SK-N-SH (cell line): ENCODE measurements at regions of chr5 and their contacts with region 1.

Region 1: GRCh38 chr5:81194633-81195333 is 38.3 kb upstream of the CKMT2 start:
- DNase-seq: peak; percentile 94
- H3K4me3 ChIP-seq: peak overlapping the region in 1 of 2 experiments; percentile 35; a peak in 1 of 4 replicates
- H3K27ac ChIP-seq: no peak overlapping the region
- H3K4me1 ChIP-seq: peaks cover 0 to 4% of the 10 kb centered on the region in 2 experiments; a peak in 1 of 4 replicates
- H3K27me3 ChIP-seq: no peaks in the 10 kb centered on the region
- CTCF ChIP-seq: peak; percentile 92
- EP300 ChIP-seq: no peak
- RAD21 ChIP-seq: peak; percentile 94

Region 2: GRCh38 chr5:80686757-80687156 is 508.0 kb before region 1 on chr5:
- CTCF ChIA-PET with region 1: interaction called, 22 read pairs
- POLR2A ChIA-PET with region 1: no interaction called
- DNase-seq: no peak
- H3K4me3 ChIP-seq: no peak overlapping the region; a peak in 1 of 4 replicates
- H3K27ac ChIP-seq: no peak overlapping the region
- H3K4me1 ChIP-seq: no peaks in the 10 kb centered on the region
- H3K27me3 ChIP-seq: no peaks in the 10 kb centered on the region
- CTCF ChIP-seq: peak; percentile 64
- EP300 ChIP-seq: no peak
- RAD21 ChIP-seq: peak; percentile 67

Region 3: DNA sequence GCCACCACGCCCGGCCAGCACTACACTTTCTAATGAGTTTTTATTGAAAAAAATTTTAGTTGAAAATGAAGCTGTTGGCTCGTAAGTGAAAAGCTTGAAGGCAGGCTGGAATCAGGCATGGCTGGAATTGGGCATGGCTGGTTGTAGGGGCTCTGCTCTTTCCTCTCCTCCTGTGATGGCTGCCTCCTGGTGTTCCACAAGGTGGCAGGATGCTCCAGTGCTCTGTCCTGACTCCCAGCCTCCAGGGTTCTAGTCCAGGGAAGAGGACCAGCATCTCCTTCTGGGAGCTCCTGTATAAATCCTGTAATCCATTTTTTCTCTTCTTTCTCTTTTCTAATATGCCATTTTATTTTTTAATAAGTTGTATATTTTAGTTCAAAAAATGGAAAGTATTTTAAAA is 482.8 kb before region 1 on chr5:
- CTCF ChIA-PET with region 1: interaction called, 22 read pairs
- POLR2A ChIA-PET with region 1: no interaction called
- DNase-seq: peak; percentile 58
- H3K4me3 ChIP-seq: no peak overlapping the region
- H3K27ac ChIP-seq: no peak overlapping the region
- H3K4me1 ChIP-seq: no peaks in the 10 kb centered on the region; a peak in 2 of 4 replicates
- H3K27me3 ChIP-seq: no peaks in the 10 kb centered on the region
- CTCF ChIP-seq: peak; percentile 53
- EP300 ChIP-seq: no peak
- RAD21 ChIP-seq: peak; percentile 77

Region 4: DNA sequence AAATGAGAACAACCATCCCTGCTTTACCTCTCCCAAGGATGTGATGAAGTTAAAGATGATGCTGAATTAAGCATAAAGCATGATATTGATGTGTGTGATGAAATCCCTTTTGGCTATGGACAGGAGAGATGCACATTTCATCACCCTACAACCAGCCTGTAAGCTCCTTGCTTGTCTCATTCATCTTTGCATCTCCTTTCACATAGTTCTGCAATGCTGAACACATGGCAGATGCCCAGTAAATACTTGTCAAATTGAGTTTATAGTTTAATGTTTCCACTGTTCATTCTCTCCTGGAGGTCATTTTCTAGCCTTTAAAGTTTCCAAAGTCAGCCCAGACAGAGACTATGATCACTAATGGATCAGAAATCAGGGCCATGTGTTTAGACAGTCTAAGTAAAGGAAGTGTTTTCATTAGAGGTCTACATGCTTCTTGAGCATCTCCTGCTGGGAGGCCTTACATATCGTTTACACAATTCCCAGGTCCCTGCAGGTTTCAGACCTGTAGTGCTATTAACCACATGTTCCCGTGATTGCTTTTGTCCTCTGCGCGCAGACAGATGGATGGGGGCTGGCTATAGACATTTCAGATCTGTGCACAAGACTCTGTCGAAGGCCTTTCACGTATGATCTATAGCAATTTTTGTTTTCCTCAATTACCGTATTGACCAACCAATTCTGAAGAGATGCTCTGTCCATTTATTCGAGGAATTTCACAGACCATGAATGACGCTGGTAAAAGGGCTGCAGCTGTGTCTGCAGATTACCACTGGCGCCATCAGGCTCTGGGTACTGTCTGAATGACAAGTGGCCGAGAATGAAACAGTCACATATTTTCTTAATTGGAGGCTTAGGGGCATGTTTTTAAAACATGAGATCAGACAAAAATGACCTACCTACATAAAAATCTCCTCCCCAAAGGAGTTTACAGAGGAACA is 10.7 kb before region 1 on chr5:
- CTCF ChIA-PET with region 1: interaction called, 58 read pairs
- POLR2A ChIA-PET with region 1: no interaction called
- DNase-seq: peak; percentile 64
- H3K4me3 ChIP-seq: no peak overlapping the region
- H3K27ac ChIP-seq: peak overlapping the region; percentile 15 to 86; a peak in 3 of 4 replicates
- H3K4me1 ChIP-seq: peaks cover 0 to 52% of the 10 kb centered on the region in 2 experiments; a peak in 2 of 4 replicates
- H3K27me3 ChIP-seq: no peaks in the 10 kb centered on the region
- CTCF ChIP-seq: no peak
- EP300 ChIP-seq: peak in 1 of 2 experiments; percentile 75; a peak in 2 of 4 replicates
- RAD21 ChIP-seq: no peak; the same call in 1 of the 2 replicates

Region 5: GRCh38 chr5:81207009-81207408 is 12.2 kb after region 1 on chr5:
- CTCF ChIA-PET with region 1: interaction called, 14 read pairs
- POLR2A ChIA-PET with region 1: no interaction called
- DNase-seq: no peak
- H3K4me3 ChIP-seq: no peak overlapping the region
- H3K27ac ChIP-seq: no peak overlapping the region
- H3K4me1 ChIP-seq: no peaks in the 10 kb centered on the region; a peak in 1 of 4 replicates
- H3K27me3 ChIP-seq: no peaks in the 10 kb centered on the region
- CTCF ChIP-seq: 0 out of 2 replicates have a peak, but pooled peaks have one; percentile 16
- EP300 ChIP-seq: no peak
- RAD21 ChIP-seq: no peak

Region 6: DNA sequence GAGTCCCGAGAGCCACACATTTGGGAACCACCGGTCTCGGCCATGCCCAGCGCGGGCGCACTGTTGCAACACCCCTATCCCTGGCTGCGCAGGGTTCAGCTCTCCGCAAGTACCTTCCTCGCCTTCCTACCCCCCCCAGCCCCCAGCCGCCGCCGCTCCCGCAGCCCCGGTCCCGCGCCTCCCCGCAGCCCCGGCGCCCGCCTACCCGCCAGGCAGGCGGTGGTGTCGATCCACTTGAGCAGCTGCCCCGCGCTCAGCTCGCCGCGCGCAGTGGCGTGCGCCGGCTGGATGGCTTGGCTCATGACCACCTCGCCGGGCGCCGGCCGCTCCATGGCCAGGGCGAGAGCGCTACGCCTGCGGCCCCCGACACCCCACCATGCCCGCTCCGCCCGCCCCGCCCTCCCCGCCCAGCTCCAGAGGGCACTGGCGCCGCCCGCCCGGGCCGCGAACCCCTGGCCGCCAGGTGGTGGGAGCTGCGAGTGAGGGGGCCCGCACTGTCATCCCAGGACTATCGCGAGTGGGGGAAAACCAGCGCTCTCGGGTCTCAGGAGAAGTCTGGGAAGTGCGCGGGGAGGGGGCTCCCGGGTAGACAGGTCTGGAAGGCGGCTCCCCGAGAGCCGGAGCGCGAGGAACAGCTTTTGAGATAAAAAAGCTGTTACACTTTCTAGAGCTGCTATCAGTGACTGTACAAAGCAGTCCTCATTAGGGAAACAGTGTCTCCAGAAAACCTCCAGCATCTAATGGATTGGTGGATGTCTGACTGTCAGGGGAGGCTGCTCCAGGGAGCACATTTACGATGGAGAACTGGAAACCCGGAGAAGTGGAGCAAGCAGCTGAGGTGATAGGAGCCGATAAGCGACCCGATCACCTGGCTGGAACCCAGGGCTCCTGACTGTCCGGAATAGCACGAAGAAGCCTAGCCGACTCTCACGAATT is 199.3 kb after region 1 on chr5 and contains the start of gene ACOT12:
- CTCF ChIA-PET with region 1: no interaction called
- POLR2A ChIA-PET with region 1: no interaction called
- DNase-seq: peak; percentile 73
- H3K4me3 ChIP-seq: peak within 1 kb of the TSS; percentile 42 to 59
- H3K27ac ChIP-seq: no peak within 1 kb of the TSS
- H3K4me1 ChIP-seq: no peaks in the 10 kb centered on the region; a peak in 1 of 4 replicates
- H3K27me3 ChIP-seq: no peaks in the 10 kb centered on the region
- CTCF ChIP-seq: no peak
- EP300 ChIP-seq: no peak
- RAD21 ChIP-seq: no peak
- polyA plus RNA-seq, gene ACOT12: 0.07 and 0.19 TPM in 2 replicates